Mammary epithelial cell (primary cell): ENCODE measurements at regions of chr4 and their contacts with region 1.

Region 1: DNA sequence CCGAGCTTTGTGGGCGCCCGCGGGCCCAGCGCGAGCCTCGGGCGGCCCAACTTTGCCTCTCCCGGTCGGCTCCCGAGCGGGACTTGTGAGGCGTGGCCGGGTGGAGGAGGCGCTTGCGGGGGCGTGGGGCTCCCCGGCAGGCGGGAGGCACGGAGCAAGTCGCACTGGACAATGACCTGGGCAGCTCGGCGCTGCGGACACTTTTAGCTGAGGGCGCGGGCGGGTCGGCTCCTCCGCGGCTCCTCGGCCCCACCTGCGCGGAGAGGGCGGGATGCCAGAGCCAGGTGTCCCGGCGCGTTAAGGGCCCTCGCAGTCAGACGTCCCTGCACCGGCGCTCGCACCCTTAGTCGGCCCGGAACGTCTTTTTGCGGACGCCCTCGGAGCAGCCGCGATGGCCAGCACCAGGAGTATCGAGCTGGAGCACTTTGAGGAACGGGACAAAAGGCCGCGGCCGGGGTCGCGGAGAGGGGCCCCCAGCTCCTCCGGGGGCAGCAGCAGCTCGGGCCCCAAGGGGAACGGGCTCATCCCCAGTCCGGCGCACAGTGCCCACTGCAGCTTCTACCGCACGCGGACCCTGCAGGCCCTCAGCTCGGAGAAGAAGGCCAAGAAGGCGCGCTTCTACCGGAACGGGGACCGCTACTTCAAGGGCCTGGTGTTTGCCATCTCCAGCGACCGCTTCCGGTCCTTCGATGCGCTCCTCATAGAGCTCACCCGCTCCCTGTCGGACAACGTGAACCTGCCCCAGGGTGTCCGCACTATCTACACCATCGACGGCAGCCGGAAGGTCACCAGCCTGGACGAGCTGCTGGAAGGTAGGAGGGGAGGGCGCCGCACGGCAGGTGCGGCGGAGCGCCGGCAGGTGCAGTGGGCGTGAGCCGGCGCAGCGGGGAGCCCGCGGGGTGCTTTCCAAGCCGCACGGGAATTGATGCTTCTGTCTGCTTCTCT is 664 bp downstream of the DCLK2 start:
- DNase-seq: peak; percentile 21
- H3K4me3 ChIP-seq: peak overlapping the region; percentile 41 to 55 (median 50)
- H3K27ac ChIP-seq: no peak overlapping the region
- H3K4me1 ChIP-seq: peaks cover 8% of the 10 kb centered on the region
- H3K27me3 ChIP-seq: peaks cover 13% of the 10 kb centered on the region
- CTCF ChIP-seq: no peak

Region 2: GRCh38 chr4:150010525-150011126 is 68.3 kb before region 1 on chr4:
- CTCF ChIA-PET with region 1: no interaction called
- dilution Hi-C with region 1: no loop called
- in situ Hi-C with region 1: no loop called
- intact Hi-C with region 1: loop called (anchors 2 kb)
- DNase-seq: peak; percentile 52
- H3K4me3 ChIP-seq: no peak overlapping the region
- H3K27ac ChIP-seq: no peak overlapping the region
- H3K4me1 ChIP-seq: no peaks in the 10 kb centered on the region
- H3K27me3 ChIP-seq: no peaks in the 10 kb centered on the region
- CTCF ChIP-seq: peak; percentile 44 to 61